ENCODE measurements at regions of chr4 and their contacts with region 1.

Region 1: DNA sequence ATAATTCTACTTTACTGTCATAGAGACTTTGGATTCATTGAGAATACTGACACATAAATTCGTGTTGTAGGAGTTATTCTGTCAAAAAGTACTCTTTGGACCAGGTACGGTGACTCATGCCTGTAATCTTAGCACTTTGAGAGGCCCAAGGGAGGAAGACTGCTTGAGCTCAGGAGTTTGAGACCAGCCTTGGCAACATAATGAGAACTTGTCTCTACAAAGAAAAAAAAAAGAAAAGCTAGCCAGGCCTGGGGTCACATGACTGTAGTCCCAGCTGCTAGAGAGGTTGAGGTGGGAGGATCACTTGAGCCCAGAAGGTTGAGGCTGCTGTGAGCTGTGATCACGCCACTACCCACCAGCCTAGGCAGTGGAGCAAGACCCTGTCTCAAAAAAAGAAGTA is 54.9 kb downstream of the WDR19 start:
- DNase-seq: no peak
- ATAC-seq: no peak
- H3K4me3 ChIP-seq: no peak overlapping the region
- H3K27ac ChIP-seq: peak overlapping the region in 1 of 2 donors; percentile 5
- H3K4me1 ChIP-seq: peaks cover 0 to 4% of the 10 kb centered on the region in 2 donors
- H3K27me3 ChIP-seq: no peaks in the 10 kb centered on the region

Region 2: DNA sequence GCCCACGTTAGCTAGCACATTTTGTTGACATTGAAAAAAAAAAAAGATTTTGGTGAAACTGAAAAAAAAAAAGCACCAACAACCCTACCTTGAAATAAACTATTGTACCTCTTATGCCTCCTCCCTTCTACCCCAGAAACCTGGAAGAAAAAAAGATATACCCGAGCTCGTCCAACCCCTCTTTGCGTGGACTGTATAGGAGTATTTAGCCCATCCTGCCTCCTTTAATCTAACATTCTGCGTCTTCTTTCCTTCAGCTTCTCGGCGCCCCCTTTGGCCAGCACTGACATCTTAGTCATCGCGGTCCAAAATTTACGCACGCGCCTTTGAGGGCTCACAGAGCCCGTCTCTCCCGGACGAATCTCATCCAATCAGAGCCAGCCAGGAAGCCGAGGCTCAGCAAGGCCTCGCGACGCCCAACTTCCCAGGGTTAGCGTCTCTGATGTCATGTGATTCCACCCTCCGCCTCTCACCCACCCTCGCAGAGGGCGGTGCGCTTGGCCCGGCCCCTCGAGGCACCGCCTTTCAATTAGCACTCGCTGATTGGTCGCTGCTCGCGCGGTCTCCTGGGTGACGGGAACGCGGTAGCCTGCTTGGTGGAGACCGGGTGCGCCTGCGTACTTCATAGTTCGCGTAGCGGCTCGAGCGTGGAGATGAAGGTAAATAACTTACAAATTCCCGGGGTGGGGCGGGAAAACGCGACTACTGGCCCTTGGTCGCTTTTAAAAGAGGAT is 55.1 kb before region 1 on chr4 and contains the start of gene WDR19:
- intact Hi-C with region 1: loop called in 1 of 2 experiments (anchors 5 kb)
- DNase-seq: peak; percentile 99
- ATAC-seq: peak; percentile 100
- H3K4me3 ChIP-seq: peak within 1 kb of the TSS; percentile 69 to 95
- H3K27ac ChIP-seq: peak within 1 kb of the TSS in 1 of 2 donors; percentile 2
- H3K4me1 ChIP-seq: no peaks in the 10 kb centered on the region
- H3K27me3 ChIP-seq: no peaks in the 10 kb centered on the region
- total RNA-seq, gene WDR19: 40.9 to 63.4 TPM

Region 3: GRCh38 chr4:39256436-39256835 is 19.3 kb after region 1 on chr4:
- intact Hi-C with region 1: loop called in 1 of 2 experiments (anchors 2 kb)
- DNase-seq: peak in 1 of 2 donors; percentile 55
- ATAC-seq: peak; percentile 81
- H3K4me3 ChIP-seq: no peak overlapping the region
- H3K27ac ChIP-seq: peak overlapping the region; percentile 59 to 94
- H3K4me1 ChIP-seq: peaks cover 0 to 4% of the 10 kb centered on the region in 2 donors
- H3K27me3 ChIP-seq: no peaks in the 10 kb centered on the region

Measured in aorta (tissue), 5 donors.